ENCODE measurements at regions of chr9 and their contacts with region 1.

Region 1: GRCh38 chr9:34437006-34437925 is 21.1 kb downstream of the FAM219A start:
- DNase-seq: peak; percentile 38
- H3K4me3 Mint-ChIP-seq: no peak overlapping the region
- H3K27ac Mint-ChIP-seq: no peak overlapping the region
- H3K4me1 Mint-ChIP-seq: no peaks in the 10 kb centered on the region
- H3K27me3 Mint-ChIP-seq: no peaks in the 10 kb centered on the region

Region 2: DNA sequence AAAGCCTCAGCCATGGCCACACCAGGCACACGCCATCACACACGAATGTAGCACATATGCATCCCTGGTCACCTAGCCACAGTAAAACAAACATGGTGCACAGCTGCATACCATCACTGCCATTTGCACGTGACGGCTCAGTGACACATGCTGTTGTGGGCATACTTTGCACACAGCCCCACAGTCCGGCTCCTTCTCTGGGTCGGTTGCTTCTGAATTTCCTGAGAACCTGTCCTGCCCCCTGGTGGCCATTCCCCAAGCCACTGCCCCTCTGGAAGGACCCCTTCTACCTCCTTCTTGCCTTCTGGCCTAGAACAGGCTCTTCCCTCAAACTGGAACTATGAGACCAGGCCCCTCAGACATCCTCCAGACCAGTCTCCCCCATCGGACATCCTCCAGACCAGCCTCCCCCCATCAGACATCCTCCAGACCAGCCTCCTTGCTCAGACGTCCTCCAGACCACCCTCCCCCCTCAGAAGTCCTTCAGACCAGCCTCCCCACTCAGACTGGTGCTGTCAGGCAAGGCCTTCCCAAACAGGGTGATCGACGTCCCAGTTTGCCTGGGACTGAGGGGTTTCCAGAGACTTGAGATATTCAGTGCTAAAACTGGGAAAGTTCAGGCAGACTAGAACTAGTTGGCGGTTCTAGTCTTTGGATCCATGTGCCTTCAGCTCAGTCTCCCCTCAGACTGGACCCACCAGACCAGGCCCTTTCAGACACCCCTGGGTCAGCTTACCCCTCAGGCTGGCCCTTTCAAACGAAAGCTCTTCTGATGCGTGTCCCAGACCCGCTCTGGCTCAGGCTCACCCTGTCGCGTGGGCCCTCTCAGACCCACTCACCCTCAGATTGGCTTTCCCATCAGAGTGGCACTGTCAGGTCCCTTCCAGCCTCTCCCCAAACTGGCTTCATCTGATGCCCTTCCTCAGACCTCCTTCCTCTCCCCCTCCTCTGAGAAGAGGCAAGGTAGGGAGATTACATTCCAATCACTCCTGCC is 109.9 kb after region 1 on chr9:
- intact Hi-C with region 1: loop called (anchors 1 kb)
- DNase-seq: peak; percentile 18
- H3K4me3 Mint-ChIP-seq: no peak overlapping the region
- H3K27ac Mint-ChIP-seq: no peak overlapping the region
- H3K4me1 Mint-ChIP-seq: no peaks in the 10 kb centered on the region
- H3K27me3 Mint-ChIP-seq: peaks cover 13% of the 10 kb centered on the region

Measured in activated T-helper 2 cell treated with anti-CD3 and anti-CD28 coated beads, Interferon-gamma antibody, Interleukin-2, Interleukin-4, amounts not matched to agents 10 μg/mL and 5 μg/mL and 100 μg/mL, durations not matched to agents 14 hours and 24 hours and 36 hours (primary cell).